Caco-2 (cell line): ENCODE measurements at regions of chr18 and their contacts with region 1.

Region 1: DNA sequence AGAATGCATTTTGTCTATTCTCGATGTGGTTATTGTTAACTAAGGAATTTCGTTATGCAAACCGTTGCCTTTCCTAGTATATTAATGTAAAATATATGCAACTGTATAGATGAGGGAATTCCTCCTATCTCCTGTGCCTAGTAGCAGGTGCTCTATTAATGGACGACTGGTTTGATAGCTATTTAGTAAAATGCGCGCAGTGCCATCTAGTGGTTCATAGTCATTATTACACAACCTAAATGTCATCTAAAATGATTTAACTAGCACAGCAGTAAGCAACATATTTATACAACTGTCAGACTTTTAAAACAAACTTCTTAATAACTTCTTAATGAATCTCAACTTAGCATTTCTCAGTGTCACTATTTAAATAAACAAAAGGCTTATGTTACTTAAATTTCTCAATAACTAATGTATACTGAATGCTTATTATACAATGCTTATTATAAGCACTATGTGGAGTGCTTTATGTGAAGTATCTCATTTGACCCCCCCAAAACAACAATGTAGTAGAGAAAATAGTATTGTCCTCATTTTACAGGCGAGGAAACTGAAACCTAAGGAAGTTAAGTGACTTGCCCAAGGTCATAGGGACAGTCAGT is 77.9 kb downstream of the DTNA start:
- DNase-seq: peak; percentile 23 to 33
- H3K4me3 ChIP-seq: no peak overlapping the region
- H3K4me3 Mint-ChIP-seq: no peak overlapping the region
- H3K27ac Mint-ChIP-seq: no peak overlapping the region
- H3K4me1 ChIP-seq: no peaks in the 10 kb centered on the region
- H3K4me1 Mint-ChIP-seq: no peaks in the 10 kb centered on the region
- H3K27me3 ChIP-seq: no peaks in the 10 kb centered on the region
- H3K27me3 Mint-ChIP-seq: no peaks in the 10 kb centered on the region
- CTCF ChIP-seq: peak; percentile 27 to 36

Region 2: GRCh38 chr18:34352385-34353163 is 435.5 kb before region 1 on chr18:
- CTCF ChIA-PET with region 1: no interaction called
- POLR2A ChIA-PET with region 1: no interaction called
- intact Hi-C with region 1: loop called (anchors 5 kb)
- DNase-seq: no peak
- H3K4me3 ChIP-seq: no peak overlapping the region
- H3K4me3 Mint-ChIP-seq: no peak overlapping the region
- H3K27ac Mint-ChIP-seq: no peak overlapping the region
- H3K4me1 ChIP-seq: no peaks in the 10 kb centered on the region
- H3K4me1 Mint-ChIP-seq: no peaks in the 10 kb centered on the region
- H3K27me3 ChIP-seq: no peaks in the 10 kb centered on the region
- H3K27me3 Mint-ChIP-seq: peaks cover 4% of the 10 kb centered on the region
- CTCF ChIP-seq: no peak

Region 3: GRCh38 chr18:34548118-34548972 is 239.7 kb before region 1 on chr18:
- CTCF ChIA-PET with region 1: no interaction called
- POLR2A ChIA-PET with region 1: no interaction called
- intact Hi-C with region 1: loop called (anchors 5 kb)
- DNase-seq: peak in 1 of 2 experiments; percentile 1
- H3K4me3 ChIP-seq: no peak overlapping the region
- H3K4me3 Mint-ChIP-seq: no peak overlapping the region
- H3K27ac Mint-ChIP-seq: no peak overlapping the region
- H3K4me1 ChIP-seq: no peaks in the 10 kb centered on the region
- H3K4me1 Mint-ChIP-seq: no peaks in the 10 kb centered on the region
- H3K27me3 ChIP-seq: no peaks in the 10 kb centered on the region
- H3K27me3 Mint-ChIP-seq: no peaks in the 10 kb centered on the region
- CTCF ChIP-seq: peak in 1 of 2 experiments; percentile 3

Region 4: DNA sequence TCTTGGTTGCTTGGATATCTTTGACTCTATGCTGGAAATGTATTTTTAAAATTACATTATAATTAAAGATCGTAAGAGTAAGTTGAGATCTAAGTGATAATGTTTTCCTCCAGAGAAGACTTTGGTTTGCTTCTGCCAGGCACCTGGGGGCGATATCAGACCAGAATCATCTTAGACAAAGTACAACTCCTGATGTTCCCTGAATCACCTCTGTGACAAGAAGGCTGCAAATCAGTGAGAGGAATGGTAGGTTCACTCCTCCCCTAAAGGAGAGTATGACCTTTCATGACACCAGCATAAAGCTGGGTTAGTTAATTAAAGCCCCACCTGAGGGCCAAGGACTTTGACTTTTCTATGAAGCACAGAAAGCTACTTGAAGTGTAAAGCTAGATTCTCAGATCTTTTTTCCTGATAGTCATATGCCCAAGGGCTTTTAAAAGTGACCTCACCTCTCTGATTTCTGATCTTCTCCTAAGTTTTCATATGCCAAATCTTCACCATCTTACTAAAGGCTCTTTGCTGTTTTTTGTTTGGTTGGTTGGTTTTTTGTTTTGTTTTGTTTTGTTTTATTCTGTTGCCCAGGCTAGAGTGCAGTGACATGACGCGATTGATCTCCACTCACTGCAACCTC is 192.2 kb before region 1 on chr18:
- CTCF ChIA-PET with region 1: no interaction called
- POLR2A ChIA-PET with region 1: no interaction called
- intact Hi-C with region 1: loop called (anchors 1 kb)
- DNase-seq: peak in 1 of 2 experiments; percentile 36
- H3K4me3 ChIP-seq: no peak overlapping the region
- H3K4me3 Mint-ChIP-seq: no peak overlapping the region
- H3K27ac Mint-ChIP-seq: no peak overlapping the region
- H3K4me1 ChIP-seq: no peaks in the 10 kb centered on the region
- H3K4me1 Mint-ChIP-seq: no peaks in the 10 kb centered on the region
- H3K27me3 ChIP-seq: no peaks in the 10 kb centered on the region
- H3K27me3 Mint-ChIP-seq: no peaks in the 10 kb centered on the region
- CTCF ChIP-seq: peak in 1 of 2 experiments; percentile 31

Region 5: GRCh38 chr18:34661464-34662111 is 126.4 kb before region 1 on chr18:
- CTCF ChIA-PET with region 1: interaction called, 28 read pairs
- POLR2A ChIA-PET with region 1: no interaction called
- intact Hi-C with region 1: loop called (anchors 1 kb)
- DNase-seq: peak in 1 of 2 experiments; percentile 30
- H3K4me3 ChIP-seq: no peak overlapping the region
- H3K4me3 Mint-ChIP-seq: no peak overlapping the region
- H3K27ac Mint-ChIP-seq: no peak overlapping the region
- H3K4me1 ChIP-seq: no peaks in the 10 kb centered on the region
- H3K4me1 Mint-ChIP-seq: peaks cover 6% of the 10 kb centered on the region
- H3K27me3 ChIP-seq: no peaks in the 10 kb centered on the region
- H3K27me3 Mint-ChIP-seq: no peaks in the 10 kb centered on the region
- CTCF ChIP-seq: peak; percentile 46 to 60

Region 6: DNA sequence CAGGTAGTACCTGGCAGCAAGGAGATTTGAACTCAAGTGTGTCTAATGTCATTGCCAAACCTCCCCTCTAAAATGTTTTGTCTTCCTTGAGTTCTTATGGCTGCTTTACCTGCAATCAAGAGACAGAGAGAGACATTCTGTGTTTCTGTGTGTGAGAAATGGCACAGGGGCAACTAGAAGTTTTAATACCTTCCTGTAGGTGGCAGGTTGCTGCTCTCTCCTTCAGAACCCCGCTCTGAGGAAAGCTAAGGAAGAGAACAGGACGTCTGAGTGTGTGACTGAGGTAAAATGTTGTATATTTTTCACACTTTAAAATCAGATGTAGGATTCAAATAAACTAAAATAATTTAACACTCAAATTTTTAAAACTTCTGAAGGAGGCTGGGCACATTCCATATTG is 58.8 kb before region 1 on chr18:
- CTCF ChIA-PET with region 1: interaction called, 3 read pairs
- POLR2A ChIA-PET with region 1: no interaction called
- intact Hi-C with region 1: loop called (anchors 2 kb)
- DNase-seq: peak in 1 of 2 experiments; percentile 37
- H3K4me3 ChIP-seq: no peak overlapping the region
- H3K4me3 Mint-ChIP-seq: no peak overlapping the region
- H3K27ac Mint-ChIP-seq: no peak overlapping the region
- H3K4me1 ChIP-seq: peaks cover 15% of the 10 kb centered on the region
- H3K4me1 Mint-ChIP-seq: peaks cover 10% of the 10 kb centered on the region
- H3K27me3 ChIP-seq: no peaks in the 10 kb centered on the region
- H3K27me3 Mint-ChIP-seq: no peaks in the 10 kb centered on the region
- CTCF ChIP-seq: peak; percentile 14 to 44

Region 7: DNA sequence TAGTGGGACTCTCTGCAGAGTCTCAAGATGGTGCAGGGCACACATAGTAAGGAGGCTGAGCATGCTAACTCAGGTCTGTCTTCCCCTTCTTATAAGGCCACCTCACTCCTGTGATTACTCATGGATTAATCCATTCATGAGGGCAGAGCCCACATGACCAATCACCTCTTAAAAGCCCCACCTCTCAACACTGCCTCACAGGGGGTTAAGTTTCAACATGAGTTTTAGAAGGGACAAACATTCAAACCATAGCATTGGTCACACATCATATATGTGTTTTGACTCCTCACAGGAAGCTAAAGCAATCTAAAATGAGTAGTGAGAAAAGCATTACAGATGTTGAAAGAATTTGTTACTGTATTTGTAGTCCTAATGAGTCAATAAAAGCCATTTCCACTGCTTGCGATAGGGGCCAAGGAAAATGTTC is 20.4 kb before region 1 on chr18:
- CTCF ChIA-PET with region 1: no interaction called
- POLR2A ChIA-PET with region 1: no interaction called
- intact Hi-C with region 1: no loop called
- DNase-seq: no peak
- H3K4me3 ChIP-seq: no peak overlapping the region
- H3K4me3 Mint-ChIP-seq: no peak overlapping the region
- H3K27ac Mint-ChIP-seq: no peak overlapping the region
- H3K4me1 ChIP-seq: no peaks in the 10 kb centered on the region
- H3K4me1 Mint-ChIP-seq: no peaks in the 10 kb centered on the region
- H3K27me3 ChIP-seq: no peaks in the 10 kb centered on the region
- H3K27me3 Mint-ChIP-seq: no peaks in the 10 kb centered on the region
- CTCF ChIP-seq: no peak

Region 8: GRCh38 chr18:34809451-34810072 is 21.5 kb after region 1 on chr18:
- CTCF ChIA-PET with region 1: no interaction called
- POLR2A ChIA-PET with region 1: no interaction called
- intact Hi-C with region 1: no loop called
- DNase-seq: peak in 1 of 2 experiments; percentile 32
- H3K4me3 ChIP-seq: no peak overlapping the region
- H3K4me3 Mint-ChIP-seq: no peak overlapping the region
- H3K27ac Mint-ChIP-seq: no peak overlapping the region
- H3K4me1 ChIP-seq: no peaks in the 10 kb centered on the region
- H3K4me1 Mint-ChIP-seq: no peaks in the 10 kb centered on the region
- H3K27me3 ChIP-seq: no peaks in the 10 kb centered on the region
- H3K27me3 Mint-ChIP-seq: no peaks in the 10 kb centered on the region
- CTCF ChIP-seq: no peak

Region 9: DNA sequence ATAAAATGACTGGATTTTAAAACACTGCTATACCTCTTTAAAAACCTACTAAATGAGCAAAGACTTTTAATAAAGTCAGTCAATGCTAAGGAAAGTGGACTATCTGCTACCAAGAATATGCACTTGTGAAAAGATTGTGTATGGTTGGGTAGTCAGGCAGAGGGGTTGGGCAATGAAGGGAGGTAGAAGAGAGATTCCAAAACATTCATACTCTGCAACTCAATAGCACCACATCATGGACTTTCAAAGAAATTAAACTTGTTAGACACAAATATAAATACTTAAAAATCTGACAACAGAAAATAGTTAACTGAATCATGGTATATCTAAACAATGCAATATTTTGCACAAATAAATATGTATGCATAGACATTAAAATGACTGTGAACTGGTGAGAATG is 113.3 kb after region 1 on chr18:
- CTCF ChIA-PET with region 1: no interaction called
- POLR2A ChIA-PET with region 1: no interaction called
- intact Hi-C with region 1: no loop called
- DNase-seq: no peak
- H3K4me3 ChIP-seq: no peak overlapping the region
- H3K4me3 Mint-ChIP-seq: no peak overlapping the region
- H3K27ac Mint-ChIP-seq: no peak overlapping the region
- H3K4me1 ChIP-seq: no peaks in the 10 kb centered on the region
- H3K4me1 Mint-ChIP-seq: no peaks in the 10 kb centered on the region
- H3K27me3 ChIP-seq: no peaks in the 10 kb centered on the region
- H3K27me3 Mint-ChIP-seq: no peaks in the 10 kb centered on the region
- CTCF ChIP-seq: no peak